Naive thymus-derived CD4-positive, alpha-beta T cell (primary cell): ENCODE measurements at regions of chr7 and their contacts with region 1.

Region 1: GRCh38 chr7:33109005-33109757 is at the start of gene RP9:
- DNase-seq: peak; percentile 65 to 85 (median 77)
- ATAC-seq: peak; percentile 96
- H3K4me3 ChIP-seq: peak within 1 kb of the TSS; percentile 83
- H3K4me3 Mint-ChIP-seq: peak within 1 kb of the TSS; percentile 83 to 96 (median 90)
- H3K27ac ChIP-seq: peak within 1 kb of the TSS; percentile 86
- H3K27ac Mint-ChIP-seq: peak within 1 kb of the TSS; percentile 25 to 95 (median 77)
- H3K4me1 ChIP-seq: peaks cover 21 to 23% of the 10 kb centered on the region in 2 donors
- H3K4me1 Mint-ChIP-seq: peaks cover 25 to 52% (median 45%) of the 10 kb centered on the region in 7 donors
- H3K27me3 ChIP-seq: no peaks in the 10 kb centered on the region
- H3K27me3 Mint-ChIP-seq: peaks cover 5 to 32% (median 16%) of the 10 kb centered on the region in 5 donors
- total RNA-seq, gene RP9: 12.7 to 23.3 (median 14.7) TPM

Region 2: GRCh38 chr7:32490127-32490822 is 618.9 kb before region 1 on chr7 and contains the start of gene LSM5:
- CTCF ChIA-PET with region 1: no interaction called
- POLR2A ChIA-PET with region 1: interaction called, 3 read pairs
- intact Hi-C with region 1: loop called (anchors 1 to 2 kb)
- DNase-seq: peak; percentile 77 to 91 (median 89)
- ATAC-seq: peak; percentile 84
- H3K4me3 ChIP-seq: peak within 1 kb of the TSS; percentile 86
- H3K4me3 Mint-ChIP-seq: peak within 1 kb of the TSS; percentile 83 to 98 (median 92)
- H3K27ac ChIP-seq: peak within 1 kb of the TSS; percentile 87
- H3K27ac Mint-ChIP-seq: peak within 1 kb of the TSS; percentile 90 to 98 (median 96)
- H3K4me1 ChIP-seq: peaks cover 8 to 13% of the 10 kb centered on the region in 2 donors
- H3K4me1 Mint-ChIP-seq: peaks cover 12 to 43% (median 31%) of the 10 kb centered on the region in 7 donors
- H3K27me3 ChIP-seq: no peaks in the 10 kb centered on the region
- H3K27me3 Mint-ChIP-seq: no peaks in the 10 kb centered on the region
- total RNA-seq, gene LSM5: 21.5 to 58.8 (median 39.4) TPM

Region 3: GRCh38 chr7:32761451-32762205 is 347.6 kb before region 1 on chr7:
- CTCF ChIA-PET with region 1: no interaction called
- POLR2A ChIA-PET with region 1: no interaction called
- intact Hi-C with region 1: loop called (anchors 1 kb)
- DNase-seq: no peak
- ATAC-seq: no peak
- H3K4me3 ChIP-seq: no peak overlapping the region
- H3K4me3 Mint-ChIP-seq: peak overlapping the region in 4 of 10 donors; percentile 25 to 75 (median 45)
- H3K27ac ChIP-seq: no peak overlapping the region
- H3K27ac Mint-ChIP-seq: no peak overlapping the region
- H3K4me1 ChIP-seq: no peaks in the 10 kb centered on the region
- H3K4me1 Mint-ChIP-seq: peaks cover 3 to 19% (median 12%) of the 10 kb centered on the region in 7 donors
- H3K27me3 ChIP-seq: peaks cover 0 to 7% of the 10 kb centered on the region in 2 donors
- H3K27me3 Mint-ChIP-seq: peaks cover 32 to 68% (median 52%) of the 10 kb centered on the region in 5 donors

Region 4: GRCh38 chr7:32891800-32892520 is 217.2 kb before region 1 on chr7:
- CTCF ChIA-PET with region 1: interaction called, 3 read pairs
- POLR2A ChIA-PET with region 1: interaction called, 4 read pairs
- intact Hi-C with region 1: loop called (anchors 1 to 5 kb)
- DNase-seq: peak; percentile 91 to 98 (median 96)
- ATAC-seq: peak; percentile 81
- H3K4me3 ChIP-seq: peak overlapping the region; percentile 87
- H3K4me3 Mint-ChIP-seq: peak overlapping the region; percentile 89 to 97 (median 95)
- H3K27ac ChIP-seq: peak overlapping the region; percentile 97
- H3K27ac Mint-ChIP-seq: peak overlapping the region; percentile 97 to 100 (median 99)
- H3K4me1 ChIP-seq: peaks cover 23 to 32% of the 10 kb centered on the region in 2 donors
- H3K4me1 Mint-ChIP-seq: peaks cover 27 to 59% (median 47%) of the 10 kb centered on the region in 7 donors
- H3K27me3 ChIP-seq: no peaks in the 10 kb centered on the region
- H3K27me3 Mint-ChIP-seq: peaks cover 0 to 2% (median 0%) of the 10 kb centered on the region in 5 donors

Region 5: DNA sequence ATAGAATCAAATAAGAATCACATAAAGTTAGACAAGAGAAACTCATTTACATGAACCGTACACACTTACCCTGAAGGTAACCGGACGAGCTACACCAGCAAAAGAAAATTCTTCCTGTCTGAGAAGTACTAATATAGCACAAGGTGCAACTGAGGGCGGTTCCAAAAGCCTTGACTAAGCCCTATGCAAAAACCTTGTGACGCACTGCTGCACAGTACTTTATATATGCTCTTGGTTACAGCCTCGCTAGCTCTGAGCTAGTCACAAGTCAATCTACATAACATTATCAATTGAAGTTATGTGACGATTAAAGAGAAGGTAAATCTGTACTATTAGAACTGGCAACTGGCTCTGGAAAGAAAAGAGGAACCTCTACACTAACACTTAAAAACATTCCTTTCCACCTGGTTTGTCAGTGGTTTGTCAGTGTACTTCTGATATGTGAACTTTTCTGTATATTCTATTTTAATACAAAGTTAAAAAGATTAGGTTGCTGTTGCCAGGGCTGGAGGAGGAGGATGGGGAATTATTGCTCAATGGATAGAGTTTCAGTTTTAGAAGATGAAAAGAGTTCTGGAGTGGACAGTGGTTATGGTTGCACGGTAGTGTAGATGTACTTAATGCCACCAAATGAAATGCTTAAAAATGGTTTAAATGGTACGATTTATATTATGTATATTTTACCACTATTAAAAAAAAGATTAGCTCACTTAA is 68.2 kb before region 1 on chr7:
- CTCF ChIA-PET with region 1: interaction called, 9 read pairs
- POLR2A ChIA-PET with region 1: interaction called, 3 read pairs
- intact Hi-C with region 1: loop called (anchors 1 kb)
- DNase-seq: peak in 8 of 9 donors; percentile 44 to 90 (median 78)
- ATAC-seq: peak; percentile 99
- H3K4me3 ChIP-seq: peak overlapping the region; percentile 40
- H3K4me3 Mint-ChIP-seq: peak overlapping the region; percentile 71 to 89 (median 84)
- H3K27ac ChIP-seq: peak overlapping the region; percentile 80
- H3K27ac Mint-ChIP-seq: peak overlapping the region; percentile 75 to 95 (median 90)
- H3K4me1 ChIP-seq: peaks cover 3 to 22% of the 10 kb centered on the region in 2 donors
- H3K4me1 Mint-ChIP-seq: peaks cover 18 to 72% (median 65%) of the 10 kb centered on the region in 7 donors
- H3K27me3 ChIP-seq: no peaks in the 10 kb centered on the region
- H3K27me3 Mint-ChIP-seq: no peaks in the 10 kb centered on the region

Region 6: GRCh38 chr7:33128990-33129805 is 20.0 kb after region 1 on chr7 and contains the start of gene BBS9:
- CTCF ChIA-PET with region 1: interaction called, 5 read pairs
- POLR2A ChIA-PET with region 1: interaction called, 4 read pairs
- intact Hi-C with region 1: loop called (anchors 1 kb)
- DNase-seq: peak; percentile 83 to 90 (median 88)
- ATAC-seq: peak; percentile 97
- H3K4me3 ChIP-seq: peak within 1 kb of the TSS; percentile 80
- H3K4me3 Mint-ChIP-seq: peak within 1 kb of the TSS; percentile 94 to 99 (median 97)
- H3K27ac ChIP-seq: peak within 1 kb of the TSS; percentile 78
- H3K27ac Mint-ChIP-seq: peak within 1 kb of the TSS; percentile 84 to 97 (median 91)
- H3K4me1 ChIP-seq: peaks cover 6 to 9% of the 10 kb centered on the region in 2 donors
- H3K4me1 Mint-ChIP-seq: peaks cover 13 to 36% (median 25%) of the 10 kb centered on the region in 7 donors
- H3K27me3 ChIP-seq: no peaks in the 10 kb centered on the region
- H3K27me3 Mint-ChIP-seq: peaks cover 0 to 18% (median 0%) of the 10 kb centered on the region in 5 donors
- total RNA-seq, gene BBS9: 11.7 to 31.0 (median 28.3) TPM

Region 7: DNA sequence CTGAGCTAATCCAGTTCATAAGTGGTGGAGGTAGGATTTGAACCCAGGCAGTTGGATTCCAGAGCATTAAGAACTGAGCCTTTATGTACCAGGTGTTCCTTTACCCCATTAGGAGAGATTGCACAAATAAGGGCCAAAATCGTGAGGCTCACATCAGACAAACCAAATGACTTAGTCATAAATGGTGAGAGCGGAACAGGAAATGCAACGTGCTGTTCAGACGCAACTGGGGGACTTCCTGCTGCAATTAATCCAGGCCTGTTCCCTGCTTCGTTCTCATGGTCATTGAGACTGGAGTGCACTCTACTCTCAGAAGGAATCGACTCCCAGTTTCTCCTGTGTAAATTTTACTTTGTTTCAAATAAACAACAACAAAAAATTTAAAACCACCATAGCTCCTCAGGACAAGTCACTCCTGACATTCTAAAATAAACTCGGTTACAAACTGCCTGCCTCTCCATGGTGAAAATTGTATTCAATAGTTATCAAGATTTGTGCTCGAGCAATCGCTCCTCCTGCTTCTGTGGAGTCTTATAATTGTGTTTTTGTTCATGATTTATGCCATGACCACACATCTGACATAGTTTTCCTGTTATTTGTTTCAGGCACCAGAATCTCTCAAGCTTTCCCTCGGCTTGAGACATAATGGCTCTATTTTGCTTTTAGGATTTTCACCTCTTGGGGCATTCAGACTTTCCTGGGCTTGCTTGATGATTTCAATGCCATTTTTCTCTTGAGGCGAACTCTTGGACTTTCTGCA is 680.9 kb after region 1 on chr7:
- CTCF ChIA-PET with region 1: no interaction called
- POLR2A ChIA-PET with region 1: no interaction called
- intact Hi-C with region 1: no loop called
- DNase-seq: no peak
- ATAC-seq: no peak
- H3K4me3 ChIP-seq: no peak overlapping the region
- H3K4me3 Mint-ChIP-seq: no peak overlapping the region
- H3K27ac ChIP-seq: no peak overlapping the region
- H3K27ac Mint-ChIP-seq: no peak overlapping the region
- H3K4me1 ChIP-seq: no peaks in the 10 kb centered on the region
- H3K4me1 Mint-ChIP-seq: no peaks in the 10 kb centered on the region
- H3K27me3 ChIP-seq: no peaks in the 10 kb centered on the region
- H3K27me3 Mint-ChIP-seq: no peaks in the 10 kb centered on the region